A549 (cell line): ENCODE measurements at regions of chr1 and their contacts with region 1.

Region 1: DNA sequence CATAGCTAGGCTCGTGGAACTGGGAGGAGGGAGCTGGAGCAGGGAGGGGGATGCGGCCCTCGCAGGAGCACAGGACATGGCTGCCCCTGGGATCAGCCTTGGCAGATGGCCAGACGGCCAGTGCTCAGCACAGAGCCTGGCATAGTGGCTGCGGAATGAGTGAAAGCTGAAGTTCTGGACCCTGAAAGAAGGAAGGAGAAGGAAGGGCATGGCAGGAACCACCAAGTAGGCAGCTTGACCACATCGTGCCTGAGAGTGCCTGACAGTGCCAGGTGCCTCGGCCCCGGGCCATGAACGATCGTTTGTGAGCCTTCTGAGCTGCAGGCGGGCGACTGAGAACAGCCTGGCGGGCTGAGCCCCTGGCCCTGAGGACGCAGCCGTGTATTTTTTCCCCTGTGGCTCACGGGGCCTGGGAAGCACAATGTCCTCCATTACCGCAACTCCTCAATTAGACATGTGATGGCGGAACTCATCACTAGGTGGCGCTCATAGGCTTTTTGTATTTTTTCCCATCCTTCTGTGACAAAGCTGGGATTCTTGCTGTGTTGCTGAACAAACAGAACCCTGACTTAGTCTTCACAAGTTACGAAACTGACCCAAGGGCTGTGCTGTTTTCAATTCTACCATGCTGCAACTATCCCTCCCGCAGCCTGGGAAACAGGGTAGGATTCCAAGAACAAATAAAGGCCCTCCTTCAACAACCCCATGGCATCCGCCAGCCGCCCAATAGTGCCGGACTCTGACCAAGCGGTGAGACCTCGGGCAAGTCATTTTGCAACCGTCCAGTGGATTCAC is 29.9 kb upstream of the TMEM61 start:
- DNase-seq: peak; percentile 69 to 72
- ATAC-seq: peak; percentile 84 to 91
- H3K4me3 ChIP-seq: peak overlapping the region; percentile 21; the same call in 1 of the 3 replicates
- H3K27ac ChIP-seq: peak overlapping the region; percentile 80 to 85
- H3K4me1 ChIP-seq: peaks cover 19% of the 10 kb centered on the region
- CTCF ChIP-seq: peak; percentile 70
- EP300 ChIP-seq: no peak
- POLR2A ChIP-seq: no peak
- RAD21 ChIP-seq: peak; percentile 78 to 83

Region 2: GRCh38 chr1:54934869-54935268 is 15.7 kb before region 1 on chr1:
- CTCF ChIA-PET with region 1: interaction called, 28 read pairs
- POLR2A ChIA-PET with region 1: no interaction called
- DNase-seq: peak in 1 of 2 experiments; percentile 46
- ATAC-seq: peak; percentile 54 to 84; a peak in 4 of 6 replicates
- H3K4me3 ChIP-seq: no peak overlapping the region
- H3K27ac ChIP-seq: peak overlapping the region in 1 of 2 experiments; percentile 68; a peak in 2 of 6 replicates
- H3K4me1 ChIP-seq: peaks cover 13% of the 10 kb centered on the region; the same call in 2 of the 3 replicates
- CTCF ChIP-seq: no peak
- EP300 ChIP-seq: no peak
- POLR2A ChIP-seq: no peak
- RAD21 ChIP-seq: no peak

Region 3: DNA sequence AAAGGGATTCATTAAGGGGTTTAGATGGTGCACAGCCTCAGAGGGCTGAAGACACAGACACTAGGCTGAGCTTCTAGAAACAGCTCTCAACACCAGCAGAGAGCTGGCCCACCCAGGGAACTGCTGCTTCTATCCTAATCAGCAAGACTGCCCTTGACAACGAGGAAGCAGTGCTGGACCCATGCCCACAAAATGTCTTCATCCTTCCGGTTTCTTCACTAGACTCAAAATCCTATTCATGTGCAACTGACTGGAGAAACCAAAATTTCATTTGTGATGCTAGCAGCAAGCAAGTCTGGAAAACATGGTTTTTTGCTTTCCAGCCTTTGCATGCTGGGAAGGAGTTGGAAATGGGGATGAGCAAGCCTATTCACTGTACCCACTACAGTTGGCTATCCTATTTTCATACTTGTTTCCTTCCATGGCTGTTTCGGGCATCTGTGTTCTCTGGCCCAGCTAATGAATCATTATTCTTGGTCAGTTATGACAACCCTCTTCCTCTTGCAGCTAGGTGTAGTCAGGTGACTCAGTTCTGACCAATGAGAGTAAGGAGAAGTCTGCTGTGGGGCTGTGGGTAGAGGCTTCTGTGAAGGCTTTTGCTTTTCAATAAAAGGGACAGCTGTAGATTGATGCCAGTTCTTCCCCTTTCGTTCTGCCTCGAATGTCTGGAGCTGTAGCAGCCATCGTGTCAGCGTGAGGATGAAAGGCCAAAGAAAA is 15.2 kb after region 1 on chr1:
- CTCF ChIA-PET with region 1: interaction called, 21 read pairs
- POLR2A ChIA-PET with region 1: no interaction called
- DNase-seq: no peak
- ATAC-seq: peak in 1 of 2 experiments; percentile 57; a peak in 2 of 6 replicates
- H3K4me3 ChIP-seq: no peak overlapping the region
- H3K27ac ChIP-seq: no peak overlapping the region
- H3K4me1 ChIP-seq: peaks cover 2% of the 10 kb centered on the region; the same call in 2 of the 3 replicates
- CTCF ChIP-seq: no peak
- EP300 ChIP-seq: no peak
- POLR2A ChIP-seq: no peak
- RAD21 ChIP-seq: no peak

Region 4: DNA sequence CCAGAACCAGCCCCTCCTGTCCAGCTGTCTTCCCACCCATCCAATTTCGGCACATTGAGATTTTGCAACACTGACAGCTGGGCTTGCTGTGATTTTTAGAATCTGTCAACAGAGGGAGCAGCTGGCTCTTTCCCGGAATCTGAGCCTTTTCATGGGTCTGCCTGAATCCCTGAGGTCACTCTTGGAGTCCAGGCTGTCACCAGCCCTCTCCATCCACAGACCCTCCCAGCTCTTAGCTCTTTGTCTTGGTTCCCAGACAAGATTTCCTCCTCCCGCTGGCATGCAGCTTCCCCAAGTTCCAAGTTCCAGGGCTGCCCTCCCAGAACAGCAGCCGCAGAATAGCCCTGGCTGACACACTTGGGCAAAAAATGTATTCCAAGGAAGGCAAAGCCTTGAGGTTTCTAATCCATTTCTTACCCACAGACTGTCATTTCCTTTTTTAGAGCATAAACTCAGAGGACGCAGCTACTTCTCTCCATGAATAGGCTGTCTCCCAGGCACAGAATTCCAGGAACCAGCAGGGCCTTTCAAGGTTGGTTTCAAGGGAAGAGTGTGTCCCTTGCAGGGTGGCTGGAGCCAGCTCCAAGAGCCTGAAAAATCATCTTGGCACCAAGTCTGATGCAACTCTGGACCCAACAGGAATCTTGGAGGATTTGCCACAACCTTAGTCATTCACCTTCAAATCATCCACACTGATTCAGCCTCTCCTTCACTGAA is 22.8 kb after region 1 on chr1:
- CTCF ChIA-PET with region 1: interaction called, 21 read pairs
- POLR2A ChIA-PET with region 1: no interaction called
- DNase-seq: peak; percentile 24 to 44
- ATAC-seq: peak; percentile 83 to 89; a peak in 5 of 6 replicates
- H3K4me3 ChIP-seq: no peak overlapping the region
- H3K27ac ChIP-seq: no peak overlapping the region
- H3K4me1 ChIP-seq: peaks cover 22% of the 10 kb centered on the region
- CTCF ChIP-seq: peak; percentile 37
- EP300 ChIP-seq: no peak
- POLR2A ChIP-seq: no peak
- RAD21 ChIP-seq: peak; percentile 19 to 27; a peak in 1 of 5 replicates

Region 5: DNA sequence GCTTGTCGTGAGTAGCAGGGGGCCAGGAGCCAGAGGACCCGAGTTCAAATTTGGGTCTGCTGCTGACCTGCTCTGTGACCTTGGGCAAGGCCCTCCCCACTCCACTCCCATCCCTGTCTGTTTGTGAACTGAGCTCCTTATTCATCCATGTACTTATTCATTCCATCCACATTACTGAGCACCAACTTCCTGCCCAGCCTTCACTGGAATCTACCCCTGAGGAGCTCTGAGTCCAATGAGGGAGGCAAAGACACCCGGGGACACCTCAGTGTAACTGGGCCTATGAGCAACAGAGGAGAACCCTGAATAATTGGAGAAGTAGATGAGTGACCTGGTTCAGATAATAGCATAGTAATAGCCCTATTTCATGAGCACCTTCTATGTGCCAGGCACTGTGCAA is 57.1 kb after region 1 on chr1:
- CTCF ChIA-PET with region 1: interaction called, 451 read pairs
- POLR2A ChIA-PET with region 1: no interaction called
- DNase-seq: no peak
- ATAC-seq: no peak
- H3K4me3 ChIP-seq: no peak overlapping the region
- H3K27ac ChIP-seq: no peak overlapping the region
- H3K4me1 ChIP-seq: no peaks in the 10 kb centered on the region
- CTCF ChIP-seq: no peak
- EP300 ChIP-seq: no peak
- POLR2A ChIP-seq: no peak
- RAD21 ChIP-seq: no peak

Region 6: GRCh38 chr1:55015731-55016620 is 65.4 kb after region 1 on chr1:
- CTCF ChIA-PET with region 1: interaction called, 41 read pairs
- POLR2A ChIA-PET with region 1: no interaction called
- DNase-seq: no peak
- ATAC-seq: 0 out of 6 replicates have a peak, but pooled peaks of 1 of the 2 experiments have one; percentile 23
- H3K4me3 ChIP-seq: no peak overlapping the region
- H3K27ac ChIP-seq: no peak overlapping the region
- H3K4me1 ChIP-seq: no peaks in the 10 kb centered on the region
- CTCF ChIP-seq: no peak
- EP300 ChIP-seq: no peak
- POLR2A ChIP-seq: no peak
- RAD21 ChIP-seq: no peak

Region 7: DNA sequence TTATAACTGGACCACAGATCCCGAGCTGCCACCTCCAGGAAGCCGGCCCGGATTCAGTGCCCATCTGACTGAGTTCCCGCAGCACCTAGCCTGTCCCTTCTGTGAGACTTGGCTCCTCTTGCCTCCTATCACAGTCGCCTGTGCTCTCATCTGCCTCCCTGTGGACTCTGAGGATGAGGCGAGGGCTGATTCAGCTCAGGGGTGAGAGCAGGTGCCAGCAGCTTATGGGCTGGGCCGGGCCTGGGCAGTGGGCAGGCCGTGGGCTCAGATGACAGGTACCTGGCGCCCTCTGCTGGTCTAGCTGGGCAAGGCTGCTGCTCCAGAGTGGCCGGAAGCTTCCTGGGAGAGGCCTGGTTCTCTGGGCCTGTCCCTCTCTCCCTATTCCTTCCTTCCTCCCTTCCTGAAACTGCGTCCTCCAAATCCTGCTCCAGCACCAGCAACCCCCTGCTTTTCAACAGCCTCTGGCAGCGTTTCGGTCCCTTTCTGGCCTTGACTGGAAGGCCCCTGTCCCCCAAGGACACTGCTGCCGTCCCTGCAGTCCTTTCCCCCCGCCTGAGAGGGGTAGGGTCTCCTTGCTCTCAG is 71.5 kb after region 1 on chr1:
- CTCF ChIA-PET with region 1: interaction called, 41 read pairs
- POLR2A ChIA-PET with region 1: interaction called, 8 read pairs
- DNase-seq: peak; percentile 83 to 87
- ATAC-seq: peak; percentile 99 to 100
- H3K4me3 ChIP-seq: no peak overlapping the region
- H3K27ac ChIP-seq: peak overlapping the region; percentile 50 to 81; a peak in 4 of 6 replicates
- H3K4me1 ChIP-seq: no peaks in the 10 kb centered on the region
- CTCF ChIP-seq: peak; percentile 79
- EP300 ChIP-seq: no peak
- POLR2A ChIP-seq: no peak
- RAD21 ChIP-seq: peak; percentile 77

Region 8: GRCh38 chr1:55081905-55082296 is 131.3 kb after region 1 on chr1:
- CTCF ChIA-PET with region 1: no interaction called
- POLR2A ChIA-PET with region 1: no interaction called
- DNase-seq: no peak
- ATAC-seq: no peak
- H3K4me3 ChIP-seq: no peak overlapping the region
- H3K27ac ChIP-seq: no peak overlapping the region
- H3K4me1 ChIP-seq: no peaks in the 10 kb centered on the region
- CTCF ChIP-seq: no peak
- EP300 ChIP-seq: no peak
- POLR2A ChIP-seq: no peak
- RAD21 ChIP-seq: no peak